A549 (cell line): ENCODE measurements at regions of chr9 and their contacts with region 1.

Region 1: GRCh38 chr9:130997925-130998596 is 10.9 kb upstream of the LAMC3 start:
- DNase-seq: peak; percentile 75 to 95
- ATAC-seq: peak; percentile 84 to 96
- H3K4me3 ChIP-seq: no peak overlapping the region
- H3K27ac ChIP-seq: peak overlapping the region; percentile 35 to 46; a peak in 2 of 6 replicates
- H3K4me1 ChIP-seq: peaks cover 26% of the 10 kb centered on the region
- CTCF ChIP-seq: peak; percentile 83
- EP300 ChIP-seq: no peak
- POLR2A ChIP-seq: no peak
- RAD21 ChIP-seq: peak; percentile 94

Region 2: GRCh38 chr9:130707225-130707976 is 290.7 kb before region 1 on chr9:
- CTCF ChIA-PET with region 1: interaction called, 28 read pairs
- POLR2A ChIA-PET with region 1: no interaction called
- DNase-seq: peak; percentile 33 to 68
- ATAC-seq: peak; percentile 80 to 85
- H3K4me3 ChIP-seq: no peak overlapping the region
- H3K27ac ChIP-seq: no peak overlapping the region
- H3K4me1 ChIP-seq: peaks cover 11% of the 10 kb centered on the region; the same call in 1 of the 3 replicates
- CTCF ChIP-seq: peak; percentile 95
- EP300 ChIP-seq: no peak
- POLR2A ChIP-seq: no peak
- RAD21 ChIP-seq: peak; percentile 76

Region 3: DNA sequence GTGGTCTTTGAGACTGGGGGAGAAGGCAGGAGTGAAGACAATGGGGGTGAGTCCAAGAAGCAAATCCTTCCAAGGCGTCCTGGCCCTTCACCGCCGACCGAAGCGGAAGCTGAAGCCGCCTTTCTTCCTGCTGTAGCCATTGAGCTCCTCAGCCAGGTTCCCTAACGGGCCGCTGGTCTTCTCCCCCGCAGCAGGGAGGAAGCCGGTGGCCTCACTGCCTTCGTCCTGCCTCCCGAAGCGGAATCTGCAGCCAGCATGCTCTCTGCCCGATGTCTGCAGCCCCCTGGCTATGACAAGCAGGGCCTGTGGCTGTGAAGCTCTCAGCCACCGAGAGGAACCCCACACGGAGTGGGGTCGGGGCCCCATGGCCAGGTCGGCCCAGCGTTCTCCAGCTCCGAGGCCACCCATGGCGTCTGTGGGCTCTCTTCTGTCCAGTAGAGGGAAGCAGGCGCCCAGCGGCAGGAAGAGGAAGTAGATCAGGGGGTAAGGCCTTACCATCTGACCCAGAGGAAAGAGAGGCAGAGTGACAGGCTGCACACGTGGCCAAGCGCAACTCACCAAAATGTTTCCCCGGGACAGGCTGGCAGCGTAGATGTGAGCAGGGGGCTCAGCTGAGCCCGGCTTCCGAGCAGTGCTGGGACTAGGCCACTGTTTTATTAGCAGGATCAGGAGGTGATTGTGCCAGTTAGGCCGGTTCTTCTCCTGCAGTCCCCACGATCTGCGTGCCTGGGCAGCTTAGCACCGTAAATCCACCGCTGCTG is 104.5 kb before region 1 on chr9:
- CTCF ChIA-PET with region 1: interaction called, 97 read pairs
- POLR2A ChIA-PET with region 1: no interaction called
- DNase-seq: peak; percentile 35 to 67
- ATAC-seq: peak; percentile 63 to 79
- H3K4me3 ChIP-seq: no peak overlapping the region
- H3K27ac ChIP-seq: 0 out of 6 replicates have a peak overlapping the region, but pooled peaks of 1 of the 2 experiments have one; percentile 21
- H3K4me1 ChIP-seq: no peaks in the 10 kb centered on the region
- CTCF ChIP-seq: peak; percentile 48
- EP300 ChIP-seq: no peak
- POLR2A ChIP-seq: no peak
- RAD21 ChIP-seq: peak; percentile 73 to 82

Region 4: GRCh38 chr9:130927995-130928900 is 69.8 kb before region 1 on chr9:
- CTCF ChIA-PET with region 1: interaction called, 49 read pairs
- POLR2A ChIA-PET with region 1: no interaction called
- DNase-seq: peak; percentile 81 to 83
- ATAC-seq: peak; percentile 60 to 72
- H3K4me3 ChIP-seq: peak overlapping the region; percentile 18; the same call in 2 of the 3 replicates
- H3K27ac ChIP-seq: peak overlapping the region; percentile 82 to 93
- H3K4me1 ChIP-seq: peaks cover 38% of the 10 kb centered on the region
- CTCF ChIP-seq: no peak
- EP300 ChIP-seq: no peak
- POLR2A ChIP-seq: no peak
- RAD21 ChIP-seq: no peak

Region 5: DNA sequence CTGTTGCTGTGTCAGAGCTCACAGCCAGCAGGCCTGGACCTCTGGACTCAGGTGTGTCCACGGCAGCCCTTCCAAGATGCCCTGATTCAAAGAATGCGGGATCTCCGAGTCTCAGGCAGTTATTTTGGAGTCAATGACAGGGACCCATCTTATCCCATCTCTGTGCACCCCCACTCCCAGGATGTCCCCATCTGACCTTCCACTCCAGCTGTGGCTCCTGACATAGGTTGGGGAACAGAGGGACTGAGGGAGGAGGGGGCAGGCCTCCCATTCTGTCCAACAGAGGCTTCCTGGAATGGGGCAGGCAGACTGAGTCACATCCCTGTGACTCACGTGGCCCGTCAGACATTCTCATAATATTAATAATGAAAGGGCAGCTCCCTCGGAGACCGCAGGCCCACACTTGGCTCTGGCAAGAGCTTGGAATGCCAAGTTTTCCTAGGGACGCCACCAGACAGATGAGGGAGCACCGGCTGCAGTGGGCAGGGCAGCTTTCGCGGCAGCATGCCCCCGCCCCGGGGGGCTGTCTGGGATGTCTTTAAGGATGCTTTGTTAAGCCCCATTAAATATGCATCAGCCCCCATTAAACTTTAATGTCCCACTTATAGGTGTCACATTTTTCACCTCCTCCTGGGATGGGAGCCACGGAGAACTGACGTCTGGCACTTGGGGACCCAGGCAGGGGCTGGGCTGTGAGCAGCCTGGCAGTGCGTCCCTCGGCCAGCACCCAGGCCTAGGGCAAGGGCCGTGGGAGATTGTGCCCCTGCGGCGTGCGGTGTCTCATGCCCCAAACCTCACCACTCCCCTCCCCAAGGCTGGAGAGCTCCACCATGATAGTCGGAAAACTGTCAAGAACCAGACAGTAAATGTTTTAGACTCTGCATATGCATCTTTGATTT is 35.4 kb before region 1 on chr9:
- CTCF ChIA-PET with region 1: interaction called, 28 read pairs
- POLR2A ChIA-PET with region 1: no interaction called
- DNase-seq: peak; percentile 82 to 95
- ATAC-seq: peak; percentile 98
- H3K4me3 ChIP-seq: no peak overlapping the region
- H3K27ac ChIP-seq: peak overlapping the region; percentile 83 to 90
- H3K4me1 ChIP-seq: peaks cover 16% of the 10 kb centered on the region
- CTCF ChIP-seq: no peak
- EP300 ChIP-seq: no peak
- POLR2A ChIP-seq: no peak
- RAD21 ChIP-seq: no peak; a peak in 1 of 5 replicates

Region 6: GRCh38 chr9:131024978-131025868 is 27.2 kb after region 1 on chr9:
- CTCF ChIA-PET with region 1: interaction called, 10 read pairs
- POLR2A ChIA-PET with region 1: no interaction called
- DNase-seq: peak in 1 of 2 experiments; percentile 26
- ATAC-seq: peak in 1 of 2 experiments; percentile 57; a peak in 3 of 6 replicates
- H3K4me3 ChIP-seq: no peak overlapping the region
- H3K27ac ChIP-seq: peak overlapping the region; percentile 36 to 73; a peak in 4 of 6 replicates
- H3K4me1 ChIP-seq: peaks cover 11% of the 10 kb centered on the region
- CTCF ChIP-seq: no peak
- EP300 ChIP-seq: no peak
- POLR2A ChIP-seq: no peak
- RAD21 ChIP-seq: no peak

Region 7: GRCh38 chr9:131076347-131077195 is 78.5 kb after region 1 on chr9:
- CTCF ChIA-PET with region 1: no interaction called
- POLR2A ChIA-PET with region 1: no interaction called
- DNase-seq: no peak
- ATAC-seq: peak in 1 of 2 experiments; percentile 54; a peak in 3 of 6 replicates
- H3K4me3 ChIP-seq: no peak overlapping the region
- H3K27ac ChIP-seq: no peak overlapping the region
- H3K4me1 ChIP-seq: no peaks in the 10 kb centered on the region
- CTCF ChIP-seq: no peak
- EP300 ChIP-seq: no peak
- POLR2A ChIP-seq: no peak
- RAD21 ChIP-seq: no peak

Region 8: GRCh38 chr9:131094622-131095021 is 96.6 kb after region 1 on chr9:
- CTCF ChIA-PET with region 1: no interaction called
- POLR2A ChIA-PET with region 1: no interaction called
- DNase-seq: no peak
- ATAC-seq: no peak
- H3K4me3 ChIP-seq: no peak overlapping the region
- H3K27ac ChIP-seq: no peak overlapping the region
- H3K4me1 ChIP-seq: 0 out of 3 replicates have a peak, but pooled peaks cover 7% of the 10 kb centered on the region
- CTCF ChIP-seq: no peak
- EP300 ChIP-seq: no peak
- POLR2A ChIP-seq: no peak
- RAD21 ChIP-seq: no peak